T-cell (primary cell): ENCODE measurements at regions of chr15 and their contacts with region 1.

Region 1: DNA sequence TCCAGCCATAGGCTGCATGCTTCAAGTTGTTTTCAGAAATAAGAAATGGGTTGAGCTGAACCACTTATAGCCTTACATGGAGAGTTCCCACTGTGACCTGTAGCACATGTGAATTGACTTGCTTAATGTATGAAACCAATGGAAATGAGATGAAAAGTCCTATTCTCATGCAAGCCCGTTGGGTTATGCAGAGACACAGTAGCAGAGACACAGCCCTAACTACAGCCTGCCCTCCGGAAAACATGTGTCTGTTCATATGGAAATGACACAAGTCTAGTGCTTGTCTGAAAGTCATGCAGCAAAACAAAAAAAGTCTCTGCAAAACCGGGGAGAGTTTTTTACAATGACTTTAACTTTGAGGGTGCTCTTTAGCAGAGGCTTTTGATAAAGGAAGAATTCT is 14.4 kb downstream of the HIGD2B start:
- DNase-seq: no peak
- ATAC-seq: no peak
- H3K4me3 ChIP-seq: no peak overlapping the region
- H3K4me3 Mint-ChIP-seq: no peak overlapping the region
- H3K27ac ChIP-seq: no peak overlapping the region
- H3K27ac Mint-ChIP-seq: no peak overlapping the region
- H3K4me1 ChIP-seq: peaks cover 0 to 7% of the 10 kb centered on the region in 2 experiments
- H3K4me1 Mint-ChIP-seq: peaks cover 2 to 7% (median 5%) of the 10 kb centered on the region in 3 donors
- H3K27me3 ChIP-seq: peaks cover 2 to 24% of the 10 kb centered on the region in 2 experiments
- H3K27me3 Mint-ChIP-seq: peaks cover 5 to 26% of the 10 kb centered on the region in 2 donors

Region 2: DNA sequence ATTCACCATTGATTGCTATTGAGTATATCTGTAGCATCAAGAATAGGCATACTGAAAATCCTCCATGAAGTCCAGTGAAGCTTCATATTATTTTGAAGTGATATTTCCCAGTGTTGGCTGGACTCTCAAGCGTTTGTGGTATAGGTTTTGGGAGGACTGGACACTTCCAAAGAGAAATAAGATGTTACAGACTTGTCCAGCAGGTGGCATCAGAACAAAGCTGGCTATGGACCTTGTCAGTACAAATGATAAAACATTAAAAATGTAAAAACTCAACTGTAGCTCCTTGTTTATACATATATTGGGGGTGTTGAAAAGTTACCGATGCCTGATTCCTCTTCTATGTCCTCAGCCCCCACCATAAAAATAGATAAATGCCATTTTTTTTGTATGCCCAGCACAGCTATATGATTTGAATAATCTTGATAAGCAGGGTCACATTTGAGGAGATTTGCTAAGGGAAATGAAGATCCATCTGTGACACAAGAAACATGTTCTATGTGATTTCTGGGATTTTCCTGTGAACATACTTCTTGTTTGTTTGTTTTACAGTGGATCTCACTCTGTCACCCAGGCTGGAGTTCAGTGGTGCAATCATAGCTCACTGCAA is 71.6 kb before region 1 on chr15:
- CTCF ChIA-PET with region 1: interaction called in 1 of 2 experiments, 13 read pairs
- POLR2A ChIA-PET with region 1: no interaction called
- DNase-seq: peak in 11 of 35 experiments; percentile 4 to 56 (median 13)
- ATAC-seq: peak in 1 of 4 experiments; percentile 37
- H3K4me3 ChIP-seq: no peak overlapping the region
- H3K4me3 Mint-ChIP-seq: no peak overlapping the region
- H3K27ac ChIP-seq: no peak overlapping the region
- H3K27ac Mint-ChIP-seq: no peak overlapping the region
- H3K4me1 ChIP-seq: no peaks in the 10 kb centered on the region
- H3K4me1 Mint-ChIP-seq: no peaks in the 10 kb centered on the region
- H3K27me3 ChIP-seq: no peaks in the 10 kb centered on the region
- H3K27me3 Mint-ChIP-seq: no peaks in the 10 kb centered on the region

Region 3: GRCh38 chr15:72685925-72686794 is 14.6 kb after region 1 on chr15 and contains the starts of genes BBS4 and HIGD2B:
- CTCF ChIA-PET with region 1: interaction called, 3 to 7 read pairs
- POLR2A ChIA-PET with region 1: interaction called in 1 of 2 experiments, 10 read pairs
- DNase-seq: peak; percentile 68 to 90 (median 80)
- ATAC-seq: peak; percentile 95 to 98 (median 98)
- H3K4me3 ChIP-seq: peak within 1 kb of the TSS; percentile 88 to 96
- H3K4me3 Mint-ChIP-seq: peak within 1 kb of the TSS; percentile 96 to 98 (median 98)
- H3K27ac ChIP-seq: peak within 1 kb of the TSS; percentile 89
- H3K27ac Mint-ChIP-seq: peak within 1 kb of the TSS; percentile 92 to 93
- H3K4me1 ChIP-seq: peaks cover 0 to 14% of the 10 kb centered on the region in 2 experiments
- H3K4me1 Mint-ChIP-seq: peaks cover 14 to 24% (median 19%) of the 10 kb centered on the region in 3 donors
- H3K27me3 ChIP-seq: no peaks in the 10 kb centered on the region
- H3K27me3 Mint-ChIP-seq: no peaks in the 10 kb centered on the region
- total RNA-seq, gene BBS4: 16.1 to 19.7 (median 16.6) TPM
- total RNA-seq, gene HIGD2B: 0.33 to 0.45 TPM in 2 of 5 donors, not detected in the others

Region 4: GRCh38 chr15:73078722-73079121 is 407.2 kb after region 1 on chr15:
- CTCF ChIA-PET with region 1: no interaction called
- POLR2A ChIA-PET with region 1: no interaction called
- DNase-seq: no peak
- ATAC-seq: no peak
- H3K4me3 ChIP-seq: no peak overlapping the region
- H3K4me3 Mint-ChIP-seq: no peak overlapping the region
- H3K27ac ChIP-seq: no peak overlapping the region
- H3K27ac Mint-ChIP-seq: no peak overlapping the region
- H3K4me1 ChIP-seq: no peaks in the 10 kb centered on the region
- H3K4me1 Mint-ChIP-seq: no peaks in the 10 kb centered on the region
- H3K27me3 ChIP-seq: peaks cover 0 to 7% of the 10 kb centered on the region in 2 experiments
- H3K27me3 Mint-ChIP-seq: peaks cover 2 to 6% of the 10 kb centered on the region in 2 donors

Region 5: GRCh38 chr15:73325193-73325861 is 653.8 kb after region 1 on chr15:
- CTCF ChIA-PET with region 1: interaction called in 1 of 2 experiments, 10 read pairs
- POLR2A ChIA-PET with region 1: no interaction called
- DNase-seq: peak in 1 of 35 experiments; percentile 11
- ATAC-seq: no peak
- H3K4me3 ChIP-seq: no peak overlapping the region
- H3K4me3 Mint-ChIP-seq: no peak overlapping the region
- H3K27ac ChIP-seq: no peak overlapping the region
- H3K27ac Mint-ChIP-seq: no peak overlapping the region
- H3K4me1 ChIP-seq: peaks cover 0 to 7% of the 10 kb centered on the region in 2 experiments
- H3K4me1 Mint-ChIP-seq: peaks cover 0 to 4% (median 0%) of the 10 kb centered on the region in 3 donors
- H3K27me3 ChIP-seq: peaks cover 0 to 39% of the 10 kb centered on the region in 2 experiments
- H3K27me3 Mint-ChIP-seq: peaks cover 10 to 18% of the 10 kb centered on the region in 2 donors

Region 6: DNA sequence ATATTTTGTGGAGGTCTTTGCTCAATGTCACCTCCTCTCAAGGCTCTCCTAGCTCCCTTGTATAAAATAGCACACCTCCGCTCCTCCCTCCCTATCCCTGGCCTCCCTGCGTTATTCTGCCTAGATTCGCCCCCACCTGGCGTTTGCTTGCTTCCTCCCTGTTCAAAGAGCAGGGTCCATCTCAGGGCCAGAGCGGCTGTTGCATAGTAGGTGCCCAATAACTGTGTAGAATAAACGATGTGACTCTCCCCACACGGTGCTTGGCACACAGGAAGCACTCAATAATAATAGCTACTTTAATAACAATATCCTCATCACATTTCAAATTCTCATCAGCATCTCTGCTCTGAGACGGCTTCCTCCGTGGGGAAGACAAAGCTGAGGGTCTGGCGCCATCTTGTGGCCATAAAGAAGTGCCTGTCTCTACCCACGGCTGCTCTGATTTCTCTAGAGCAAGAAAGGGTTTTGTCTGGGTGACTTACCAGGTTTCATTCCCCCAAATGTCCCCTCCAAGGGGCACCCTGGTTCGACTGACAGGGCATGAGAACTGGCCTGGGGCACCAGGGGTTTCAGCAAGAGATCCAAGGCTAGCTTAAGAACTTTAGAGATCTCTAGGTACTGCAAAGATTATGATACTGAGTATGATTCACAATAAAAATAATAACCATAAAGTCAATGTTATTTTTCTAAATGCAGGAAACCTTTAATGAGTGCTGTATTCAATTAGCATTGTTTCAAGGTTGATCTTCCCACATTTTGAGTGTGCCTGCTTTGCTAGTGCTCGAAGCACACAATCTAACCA is 1028.7 kb after region 1 on chr15:
- CTCF ChIA-PET with region 1: no interaction called
- POLR2A ChIA-PET with region 1: no interaction called
- DNase-seq: peak; percentile 45 to 92 (median 68)
- ATAC-seq: peak; percentile 44 to 59 (median 46)
- H3K4me3 ChIP-seq: no peak overlapping the region
- H3K4me3 Mint-ChIP-seq: no peak overlapping the region
- H3K27ac ChIP-seq: no peak overlapping the region
- H3K27ac Mint-ChIP-seq: peak overlapping the region in 1 of 2 donors; percentile 19
- H3K4me1 ChIP-seq: peaks cover 5 to 25% of the 10 kb centered on the region in 2 experiments
- H3K4me1 Mint-ChIP-seq: peaks cover 17 to 27% (median 23%) of the 10 kb centered on the region in 3 donors
- H3K27me3 ChIP-seq: peaks cover 0 to 56% of the 10 kb centered on the region in 2 experiments
- H3K27me3 Mint-ChIP-seq: peaks cover 39 to 47% of the 10 kb centered on the region in 2 donors